ENCODE measurements at regions of chr7 and their contacts with region 1.

Region 1: GRCh38 chr7:95493844-95494243 is 8.1 kb downstream of the ASB4 start:
- DNase-seq: no peak
- H3K4me3 Mint-ChIP-seq: no peak overlapping the region
- H3K27ac Mint-ChIP-seq: no peak overlapping the region
- H3K4me1 Mint-ChIP-seq: peaks cover under 1% of the 10 kb centered on the region
- H3K27me3 Mint-ChIP-seq: peaks cover 6% of the 10 kb centered on the region

Region 2: GRCh38 chr7:95476904-95477594 is 16.8 kb before region 1 on chr7:
- CTCF ChIA-PET with region 1: interaction called, 10 read pairs
- POLR2A ChIA-PET with region 1: no interaction called
- DNase-seq: peak; percentile 57
- H3K4me3 Mint-ChIP-seq: no peak overlapping the region
- H3K27ac Mint-ChIP-seq: no peak overlapping the region
- H3K4me1 Mint-ChIP-seq: no peaks in the 10 kb centered on the region
- H3K27me3 Mint-ChIP-seq: no peaks in the 10 kb centered on the region

Measured in activated CD4-positive, alpha-beta T cell treated with anti-CD3 and anti-CD28 coated beads, Interleukin-2, amount 10 ng/mL, durations not matched to agents 7 days and 5 days (primary cell).